ENCODE measurements at regions of chr3 and their contacts with region 1.

Region 1: GRCh38 chr3:123036352-123037014 is 8.9 kb upstream of the SEMA5B start:
- DNase-seq: no peak
- ATAC-seq: peak in 6 of 8 donors; percentile 26 to 88 (median 46)
- H3K4me3 ChIP-seq: no peak overlapping the region
- H3K27ac ChIP-seq: no peak overlapping the region
- H3K4me1 ChIP-seq: peaks cover 0 to 9% (median 1%) of the 10 kb centered on the region in 9 donors
- H3K27me3 ChIP-seq: peaks cover 0 to under 1% (median 0%) of the 10 kb centered on the region in 7 donors
- CTCF ChIP-seq: peak in 2 of 9 donors; percentile 14 to 15

Region 2: DNA sequence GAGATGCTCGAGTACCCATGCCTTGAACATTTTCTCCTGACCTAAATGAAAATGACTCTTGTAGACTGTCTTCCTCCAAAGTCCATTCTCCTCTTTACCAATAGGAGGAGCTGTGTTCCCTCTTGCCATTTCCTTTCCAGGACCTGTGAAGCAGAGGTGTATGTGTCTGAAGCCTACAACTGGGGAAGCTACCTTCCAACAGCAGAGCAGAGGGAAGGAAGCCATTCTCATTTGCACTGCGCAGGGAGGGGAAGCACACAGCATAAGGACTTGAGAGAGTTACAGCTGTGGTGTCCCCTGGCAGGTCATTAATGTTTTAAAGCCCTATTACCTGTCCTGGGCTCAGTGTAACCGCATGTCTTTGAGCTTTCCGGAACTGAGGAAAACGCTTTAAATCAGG is 281.6 kb before region 1 on chr3:
- intact Hi-C with region 1: loop called in 1 of 10 experiments (anchors 10 kb)
- DNase-seq: no peak
- ATAC-seq: peak in 3 of 8 donors; percentile 12 to 58 (median 30)
- H3K4me3 ChIP-seq: no peak overlapping the region
- H3K27ac ChIP-seq: no peak overlapping the region
- H3K4me1 ChIP-seq: peaks cover 0 to 13% (median 0%) of the 10 kb centered on the region in 9 donors
- H3K27me3 ChIP-seq: no peaks in the 10 kb centered on the region
- CTCF ChIP-seq: peak; percentile 26 to 76 (median 55)

Region 3: DNA sequence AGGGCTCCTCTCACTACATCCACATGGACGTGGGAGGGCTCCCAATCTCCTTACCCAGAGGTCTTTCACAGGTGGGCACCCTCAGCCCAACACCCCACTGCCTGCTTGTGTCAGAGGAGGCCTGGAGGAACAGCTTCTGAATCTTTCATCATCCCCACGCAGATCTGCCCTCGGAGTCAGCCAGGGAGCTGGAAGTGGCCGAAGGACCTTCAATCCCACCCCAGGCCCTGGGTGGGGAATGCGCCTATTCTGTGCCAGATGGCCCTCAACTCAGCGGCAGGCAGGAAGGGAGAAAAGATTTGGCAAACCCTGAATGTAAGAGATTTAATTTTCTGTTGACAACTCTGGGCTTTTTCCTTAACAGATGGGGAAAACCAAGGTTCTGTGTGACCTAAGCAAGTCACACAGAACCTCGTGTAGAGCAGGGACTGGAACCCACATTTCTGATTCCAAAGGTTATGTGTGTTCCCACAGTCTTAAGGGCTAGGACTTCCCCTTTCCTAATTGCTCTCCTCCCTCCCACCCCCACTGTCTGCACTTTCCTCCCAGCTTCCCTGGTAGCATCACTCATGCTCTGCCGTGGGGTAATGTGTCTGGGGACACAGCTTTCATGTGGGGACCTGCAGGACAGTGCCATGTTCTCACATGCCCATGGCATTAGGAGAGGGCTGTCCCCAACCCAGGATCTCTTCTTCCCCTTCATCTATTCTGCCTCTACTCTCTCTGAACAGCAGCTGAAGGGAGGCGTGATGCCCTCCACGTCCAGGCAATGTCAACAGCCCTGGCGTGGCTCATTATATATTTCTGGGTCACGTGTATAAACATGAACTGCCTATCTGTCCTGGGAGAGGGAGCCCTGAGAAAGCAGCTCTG is 107.1 kb before region 1 on chr3:
- intact Hi-C with region 1: no loop called
- DNase-seq: no peak
- ATAC-seq: peak in 5 of 8 donors; percentile 19 to 60 (median 43)
- H3K4me3 ChIP-seq: no peak overlapping the region
- H3K27ac ChIP-seq: no peak overlapping the region
- H3K4me1 ChIP-seq: peaks cover 0 to 16% (median 0%) of the 10 kb centered on the region in 9 donors
- H3K27me3 ChIP-seq: peaks cover 0 to 4% (median 0%) of the 10 kb centered on the region in 7 donors
- CTCF ChIP-seq: no peak

Region 4: DNA sequence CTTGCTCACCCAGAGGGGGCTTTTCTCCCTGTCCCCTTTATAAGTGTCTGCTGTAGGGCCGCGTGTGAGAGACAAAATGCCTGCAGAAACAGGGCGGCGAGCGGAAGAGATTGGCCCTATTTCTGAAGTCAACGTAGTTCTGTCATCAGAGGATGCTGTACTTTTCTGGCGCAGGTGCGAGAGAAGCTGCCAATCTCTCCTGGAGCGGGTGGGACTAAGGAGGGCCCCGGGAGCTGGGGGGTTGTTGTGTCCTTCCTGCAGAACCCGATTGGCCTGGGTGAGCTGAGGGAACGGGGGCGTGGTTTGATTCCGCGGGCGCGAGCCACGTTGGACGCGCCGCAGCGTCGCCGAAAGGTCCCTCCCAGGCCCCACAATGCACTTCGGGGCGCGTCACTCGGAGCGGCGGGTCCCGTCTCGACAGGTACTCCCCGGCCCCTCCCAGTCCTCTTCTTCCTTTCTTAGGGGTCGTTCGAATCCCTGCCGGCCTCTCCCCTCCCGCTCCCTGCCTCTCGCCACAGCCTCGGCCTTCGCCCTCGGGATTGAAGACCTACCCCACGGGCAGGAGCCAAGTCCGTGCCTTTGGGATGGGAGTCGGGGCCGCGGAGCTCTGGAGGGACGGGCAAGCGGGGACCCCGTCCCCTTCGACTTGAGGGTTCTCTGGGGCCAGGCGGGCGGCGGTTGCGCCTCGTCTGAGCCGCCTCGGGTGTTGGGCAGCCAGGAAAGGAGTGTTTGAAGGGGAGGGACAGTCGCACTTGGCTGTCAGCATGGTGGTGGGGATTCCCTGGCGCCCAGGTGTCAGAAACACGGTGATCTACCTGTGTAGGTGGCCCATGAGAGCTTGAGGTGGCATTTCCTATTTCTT is 165.3 kb after region 1 on chr3 and contains the start of gene SEC22A:
- intact Hi-C with region 1: loop called in 1 of 10 experiments (anchors 10 kb)
- DNase-seq: peak; percentile 90 to 94
- ATAC-seq: peak; percentile 98 to 100 (median 99)
- H3K4me3 ChIP-seq: peak within 1 kb of the TSS; percentile 78 to 100 (median 94)
- H3K27ac ChIP-seq: peak within 1 kb of the TSS; percentile 41 to 95 (median 86)
- H3K4me1 ChIP-seq: peaks cover 0 to 21% (median 15%) of the 10 kb centered on the region in 9 donors
- H3K27me3 ChIP-seq: no peaks in the 10 kb centered on the region
- CTCF ChIP-seq: no peak
- total RNA-seq, gene SEC22A: 7.0 to 13.6 (median 10.3) TPM

Measured in heart right ventricle (tissue), 16 donors.